GM10248 (cell line): ENCODE measurements at regions of chr6 and their contacts with region 1.

Region 1: DNA sequence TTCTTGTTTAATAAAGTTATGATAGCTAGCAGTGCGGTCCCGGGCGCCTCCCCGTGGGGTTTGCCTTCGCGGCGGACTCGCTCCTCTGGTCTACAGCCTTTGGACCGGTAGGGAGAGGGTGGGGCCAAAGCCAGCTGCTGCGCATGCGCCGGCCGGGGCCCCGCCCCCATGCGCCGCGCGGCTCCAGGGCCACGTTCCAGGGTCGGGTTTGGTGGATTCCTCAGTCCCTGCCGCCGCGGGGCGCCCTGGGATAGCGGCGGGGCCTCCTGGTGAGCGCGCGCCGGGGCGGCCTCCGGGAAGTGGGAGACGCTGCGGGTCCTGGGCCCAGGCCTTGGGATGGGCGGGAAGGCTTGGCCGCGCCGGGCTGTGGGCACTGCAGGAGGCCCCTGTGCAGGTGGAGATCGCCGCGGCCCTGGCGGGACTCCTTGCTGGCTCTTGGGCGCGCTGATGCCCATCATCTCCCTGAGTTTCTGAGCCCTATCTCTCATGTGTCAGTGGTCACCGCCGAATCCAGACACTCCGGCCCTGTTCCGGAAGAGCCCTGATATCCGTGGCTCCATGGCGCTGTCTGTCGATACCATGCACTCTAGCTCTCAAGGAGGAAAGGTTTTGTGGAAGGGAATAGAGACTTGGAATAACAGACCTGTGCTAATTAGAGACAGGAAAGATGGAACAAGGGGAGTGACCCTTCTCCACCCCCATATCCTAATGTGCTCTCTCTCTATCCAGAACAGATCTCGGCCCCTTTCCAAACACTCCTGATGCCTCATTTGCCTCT is at the start of gene VARS2:
- DNase-seq: peak; percentile 99
- CTCF ChIP-seq: peak; percentile 17

Region 2: DNA sequence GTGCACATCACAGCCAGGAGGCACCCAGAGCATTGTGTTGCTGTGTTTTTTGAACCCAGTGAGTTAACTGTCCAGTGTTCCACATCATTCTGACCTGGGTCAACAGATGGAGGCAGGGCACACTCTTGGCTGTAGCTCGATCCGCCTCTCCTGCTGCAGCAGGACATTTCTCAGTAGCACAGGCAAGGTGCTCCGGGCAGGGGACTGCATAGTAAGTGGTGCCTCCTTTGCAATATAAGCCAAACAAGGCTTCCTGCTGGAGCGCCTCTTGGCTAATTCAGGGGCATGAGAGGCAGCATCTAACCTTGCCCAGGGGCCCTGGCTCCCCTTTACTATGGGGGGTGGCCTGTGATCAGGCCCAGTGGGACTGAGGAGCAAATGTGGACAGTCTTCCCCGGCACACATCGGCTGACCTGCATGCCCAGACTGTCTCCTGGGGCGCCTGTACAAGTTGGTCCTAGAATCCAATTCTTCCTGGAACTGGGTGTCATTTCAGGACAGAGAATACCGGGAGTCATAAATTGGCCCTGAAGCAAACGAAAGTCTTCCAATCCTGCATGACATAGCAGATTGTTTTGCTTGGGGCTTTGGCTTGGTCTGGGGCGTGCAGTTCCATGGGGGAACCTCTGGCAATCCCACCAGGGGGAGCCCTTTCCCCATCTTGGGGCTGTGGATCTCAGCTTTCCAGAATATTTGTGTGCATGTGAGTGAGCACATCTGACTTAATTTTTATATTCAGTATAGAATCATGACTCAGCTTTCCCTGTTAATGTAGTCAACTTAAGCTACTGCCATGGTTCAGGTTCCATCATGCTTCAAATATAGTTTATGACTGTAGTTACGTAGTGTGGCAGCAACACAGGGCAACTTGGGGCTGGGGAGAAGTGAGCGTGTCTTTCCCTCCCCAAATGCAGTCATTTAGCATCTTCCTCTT is 86.0 kb before region 1 on chr6:
- CTCF ChIA-PET with region 1: interaction called, 65 read pairs
- POLR2A ChIA-PET with region 1: no interaction called
- DNase-seq: peak; percentile 76
- CTCF ChIP-seq: peak; percentile 89

Region 3: DNA sequence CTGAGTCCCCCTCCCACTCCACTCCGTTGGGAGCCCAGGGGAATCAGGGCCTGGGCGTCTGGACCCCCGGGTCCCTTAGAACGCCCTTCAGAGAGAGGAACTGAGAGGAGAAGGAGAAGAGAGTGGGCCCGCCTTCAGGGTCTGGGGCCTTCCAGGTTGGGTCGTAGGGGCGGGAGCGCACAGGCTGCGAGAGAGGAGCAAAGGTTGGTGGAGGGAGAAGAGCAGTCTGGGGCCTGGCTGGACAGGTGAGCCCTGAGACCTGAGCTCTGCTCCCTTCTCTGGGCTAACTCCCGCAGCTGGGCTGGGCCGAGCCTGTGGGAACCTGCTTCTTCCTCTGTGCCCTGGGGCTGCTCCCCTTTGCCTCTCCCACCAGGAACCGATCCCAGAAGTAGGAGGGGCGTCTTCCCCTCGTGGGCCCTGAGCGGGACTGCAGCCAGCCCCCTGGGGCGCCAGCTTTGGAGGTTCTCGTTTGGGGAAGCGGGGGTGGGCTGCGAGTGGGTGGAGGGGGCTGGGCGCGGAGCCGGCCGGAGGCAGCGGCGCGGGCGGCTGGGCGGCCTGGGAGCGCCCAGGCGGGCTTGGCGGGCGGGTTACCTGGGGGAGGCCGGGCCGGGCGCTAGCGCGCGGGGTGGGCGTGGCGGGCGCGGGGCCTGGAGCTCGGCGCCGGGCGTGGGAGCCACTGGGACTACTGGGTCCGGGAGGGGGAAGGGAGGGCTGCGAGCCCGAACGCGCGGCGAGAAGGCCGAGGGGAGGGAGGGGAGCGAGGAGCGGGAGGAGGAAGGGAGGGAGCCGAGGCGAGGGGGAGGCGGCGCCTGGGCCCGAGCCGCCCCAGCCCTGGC is 30.4 kb before region 1 on chr6 and contains the start of gene DDR1:
- CTCF ChIA-PET with region 1: interaction called, 34 read pairs
- POLR2A ChIA-PET with region 1: no interaction called
- DNase-seq: peak; percentile 84
- CTCF ChIP-seq: no peak

Region 4: DNA sequence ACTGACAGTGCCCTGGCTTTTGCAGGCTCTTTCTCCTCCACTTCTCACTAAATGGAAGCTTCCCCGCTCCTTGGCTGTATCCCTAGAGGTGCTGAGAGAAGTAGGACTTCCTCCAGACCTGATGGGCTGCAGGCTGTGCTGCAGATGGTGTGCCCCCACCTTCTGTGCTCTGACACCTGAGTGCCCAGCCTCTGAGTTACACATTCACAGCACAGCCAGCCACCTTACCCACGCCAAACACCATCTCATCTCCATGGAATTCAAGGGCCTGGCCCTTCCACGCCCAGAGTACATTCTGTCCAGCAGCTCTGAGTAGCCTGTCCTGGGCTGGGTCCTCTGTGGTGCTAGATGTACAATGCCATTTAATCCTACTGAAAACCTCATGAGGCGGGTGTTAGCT is 12.4 kb after region 1 on chr6:
- CTCF ChIA-PET with region 1: interaction called, 29 read pairs
- POLR2A ChIA-PET with region 1: interaction called, 3 read pairs
- DNase-seq: no peak
- CTCF ChIP-seq: no peak

Region 5: DNA sequence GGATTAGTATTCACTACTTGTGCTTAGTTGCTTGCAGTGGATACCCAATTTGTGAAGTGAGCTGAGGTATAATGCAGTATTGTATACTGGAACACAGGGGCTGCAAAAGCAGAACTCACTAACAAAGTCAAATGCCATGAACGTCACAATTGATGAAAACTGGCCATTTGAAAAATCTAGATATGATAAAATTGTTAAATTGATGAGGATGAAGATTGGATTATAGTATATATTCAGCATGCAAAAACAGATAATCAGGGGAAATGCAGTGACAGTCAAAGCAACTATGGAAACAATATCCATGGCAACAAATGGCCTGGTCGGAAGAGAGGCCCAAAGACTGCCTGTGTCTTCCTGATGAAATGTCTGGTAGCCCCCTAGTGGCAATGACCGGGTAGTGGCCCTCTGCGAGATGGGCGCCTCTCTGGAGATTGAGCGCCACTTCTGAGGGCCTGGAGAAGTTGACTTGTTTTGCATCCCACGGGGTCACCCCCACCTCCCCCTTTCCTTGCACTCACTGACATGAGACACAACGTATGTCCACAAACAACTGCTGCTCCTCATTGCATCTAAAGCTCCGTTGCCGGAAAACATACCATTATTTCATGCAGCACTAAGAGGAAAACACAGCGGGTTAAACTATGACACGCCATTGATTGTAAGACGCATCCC is 154.5 kb after region 1 on chr6:
- CTCF ChIA-PET with region 1: interaction called, 72 read pairs
- POLR2A ChIA-PET with region 1: no interaction called
- DNase-seq: peak; percentile 85
- CTCF ChIP-seq: peak; percentile 68

Region 6: DNA sequence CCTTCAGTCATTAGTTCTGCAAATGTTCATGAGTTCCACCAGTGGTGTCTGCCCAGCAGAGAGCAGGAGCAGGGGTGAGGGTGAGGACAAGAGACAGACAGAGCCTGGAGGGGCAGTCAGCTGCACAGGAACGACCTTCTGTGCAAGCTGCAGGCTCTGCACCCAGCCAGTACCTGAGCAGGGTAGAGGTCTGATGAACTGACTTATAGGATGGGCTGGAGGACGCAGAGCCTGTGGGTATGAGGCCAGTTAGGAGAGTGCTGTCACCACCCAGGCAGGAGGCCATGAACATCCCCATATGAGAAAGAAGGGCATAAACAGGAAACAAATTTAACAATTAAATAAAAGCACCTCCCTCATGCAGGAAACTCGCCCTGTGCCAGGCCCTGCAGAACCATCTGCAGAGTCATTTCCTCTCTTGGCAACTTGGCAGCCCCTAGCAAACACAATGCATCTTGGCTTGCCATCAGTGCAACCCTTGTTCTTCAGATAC is 180.2 kb after region 1 on chr6:
- CTCF ChIA-PET with region 1: interaction called, 16 read pairs
- POLR2A ChIA-PET with region 1: no interaction called
- DNase-seq: no peak
- CTCF ChIP-seq: no peak